ENCODE measurements at regions of chr20 and their contacts with region 1.

Region 1: DNA sequence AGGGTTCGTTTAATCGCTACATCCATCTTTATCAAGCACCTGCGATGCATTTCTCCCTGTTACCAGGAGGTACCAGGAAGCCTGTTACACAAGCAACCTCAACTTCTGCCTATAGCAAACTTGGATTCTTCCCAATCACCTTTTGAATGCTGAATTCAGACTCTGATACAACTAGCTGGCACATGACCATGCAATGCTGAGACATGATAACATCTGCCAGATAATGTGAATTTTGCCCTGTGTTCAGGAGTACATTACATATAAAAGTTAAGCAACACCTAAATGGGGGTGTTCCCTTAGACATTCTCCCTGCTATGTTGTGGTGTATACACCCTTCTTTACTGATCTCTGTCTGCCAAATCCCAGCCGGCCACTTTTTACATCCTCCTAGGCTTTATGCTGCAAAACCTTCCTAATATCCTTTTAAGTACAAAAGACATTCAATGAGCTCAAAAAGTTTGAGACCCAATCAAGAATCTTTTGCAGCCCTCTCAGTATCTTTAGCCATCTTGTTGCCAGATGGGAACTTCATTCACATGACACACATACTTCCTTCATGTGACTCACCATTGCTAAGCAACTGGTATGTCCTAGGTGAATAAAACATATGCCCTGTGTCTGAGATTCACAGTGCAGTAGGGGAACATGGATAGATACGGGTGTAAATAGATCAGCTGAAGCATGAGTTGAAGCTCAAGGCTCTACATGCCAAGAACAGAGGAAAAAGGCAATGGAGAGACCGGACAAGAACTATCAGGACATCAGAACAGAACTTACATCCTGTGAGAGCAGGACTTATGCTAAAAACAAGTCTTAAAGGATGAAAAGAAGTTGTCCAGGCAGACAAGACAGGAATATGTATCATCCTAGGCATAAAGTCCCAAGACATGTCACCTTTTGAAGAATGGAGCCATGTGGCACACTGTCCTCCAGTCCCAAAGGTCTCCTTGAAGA is 84.3 kb downstream of the ZHX3 start:
- DNase-seq: no peak
- ATAC-seq: peak; percentile 31
- H3K4me3 ChIP-seq: peak overlapping the region in 1 of 2 experiments; percentile 17; a peak in 1 of 4 replicates
- H3K27ac ChIP-seq: no peak overlapping the region
- H3K4me1 ChIP-seq: peaks cover 7 to 19% of the 10 kb centered on the region in 2 experiments
- H3K27me3 ChIP-seq: no peaks in the 10 kb centered on the region
- CTCF ChIP-seq: no peak
- POLR2A ChIP-seq: no peak
- RAD21 ChIP-seq: no peak

Region 2: DNA sequence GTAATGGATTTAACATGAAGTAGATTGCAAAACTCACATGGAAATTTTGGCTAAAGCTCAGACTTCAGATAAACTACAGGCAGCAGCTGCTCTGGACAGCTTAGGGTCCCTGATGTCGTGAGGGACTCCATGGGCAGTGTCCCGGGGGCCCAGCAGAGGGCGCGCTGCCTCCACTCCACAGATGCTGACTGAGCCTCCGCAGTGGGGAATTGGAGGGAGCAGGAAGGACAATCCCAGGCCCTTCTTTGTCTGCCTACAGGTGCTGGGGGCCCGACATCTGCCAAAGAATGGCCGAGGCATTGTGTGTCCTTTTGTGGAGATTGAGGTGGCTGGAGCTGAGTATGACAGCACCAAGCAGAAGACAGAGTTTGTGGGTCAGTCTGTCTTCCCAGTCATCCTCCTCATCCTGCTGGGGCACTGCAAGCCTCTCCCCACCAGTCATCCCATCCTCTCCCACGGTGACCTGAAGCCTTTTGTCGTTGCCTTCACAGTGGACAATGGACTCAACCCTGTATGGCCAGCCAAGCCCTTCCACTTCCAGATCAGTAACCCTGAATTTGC is 60.0 kb before region 1 on chr20:
- CTCF ChIA-PET with region 1: interaction called, 12 read pairs
- POLR2A ChIA-PET with region 1: interaction called, 4 read pairs
- RAD21 ChIA-PET with region 1: interaction called in 1 of 2 experiments, 3 read pairs
- intact Hi-C with region 1: loop called (anchors 1 kb)
- DNase-seq: peak; percentile 18
- ATAC-seq: peak; percentile 94
- H3K4me3 ChIP-seq: no peak overlapping the region
- H3K27ac ChIP-seq: no peak overlapping the region
- H3K4me1 ChIP-seq: peaks cover 3 to 15% of the 10 kb centered on the region in 2 experiments; a peak in 3 of 4 replicates
- H3K27me3 ChIP-seq: no peaks in the 10 kb centered on the region
- CTCF ChIP-seq: peak; percentile 83 to 98 (median 96)
- POLR2A ChIP-seq: no peak
- RAD21 ChIP-seq: peak; percentile 93

Region 3: DNA sequence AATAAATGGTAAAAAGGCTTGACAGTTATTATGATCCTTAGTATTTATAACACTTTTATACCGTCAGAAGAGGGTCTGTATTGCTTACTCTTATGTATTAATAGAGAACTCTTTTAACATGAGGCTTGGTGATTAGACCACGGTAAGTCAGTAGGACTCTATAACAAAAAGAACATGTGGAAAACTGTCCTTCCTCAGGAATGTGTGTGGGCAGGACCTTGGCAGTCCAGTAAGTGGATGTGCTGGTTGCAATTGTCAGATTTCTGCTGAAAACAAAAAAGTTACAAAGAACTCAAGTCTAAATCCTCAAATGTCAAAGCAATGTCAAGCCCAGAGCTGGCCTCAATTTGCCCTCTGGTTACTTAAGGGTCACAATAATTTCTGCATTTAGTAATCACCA is 14.8 kb before region 1 on chr20:
- CTCF ChIA-PET with region 1: interaction called, 10 read pairs
- POLR2A ChIA-PET with region 1: no interaction called
- RAD21 ChIA-PET with region 1: no interaction called
- intact Hi-C with region 1: no loop called
- DNase-seq: no peak
- ATAC-seq: no peak
- H3K4me3 ChIP-seq: no peak overlapping the region
- H3K27ac ChIP-seq: no peak overlapping the region
- H3K4me1 ChIP-seq: peaks cover 0 to 1% of the 10 kb centered on the region in 2 experiments; a peak in 2 of 4 replicates
- H3K27me3 ChIP-seq: no peaks in the 10 kb centered on the region
- CTCF ChIP-seq: no peak
- POLR2A ChIP-seq: no peak
- RAD21 ChIP-seq: no peak